Activated CD8-positive, alpha-beta memory T cell treated with anti-CD3 and anti-CD28 coated beads, Interleukin-2, amount 10 ng/mL, durations not matched to agents 7 days and 5 days (primary cell): ENCODE measurements at regions of chr2 and their contacts with region 1.

Region 1: DNA sequence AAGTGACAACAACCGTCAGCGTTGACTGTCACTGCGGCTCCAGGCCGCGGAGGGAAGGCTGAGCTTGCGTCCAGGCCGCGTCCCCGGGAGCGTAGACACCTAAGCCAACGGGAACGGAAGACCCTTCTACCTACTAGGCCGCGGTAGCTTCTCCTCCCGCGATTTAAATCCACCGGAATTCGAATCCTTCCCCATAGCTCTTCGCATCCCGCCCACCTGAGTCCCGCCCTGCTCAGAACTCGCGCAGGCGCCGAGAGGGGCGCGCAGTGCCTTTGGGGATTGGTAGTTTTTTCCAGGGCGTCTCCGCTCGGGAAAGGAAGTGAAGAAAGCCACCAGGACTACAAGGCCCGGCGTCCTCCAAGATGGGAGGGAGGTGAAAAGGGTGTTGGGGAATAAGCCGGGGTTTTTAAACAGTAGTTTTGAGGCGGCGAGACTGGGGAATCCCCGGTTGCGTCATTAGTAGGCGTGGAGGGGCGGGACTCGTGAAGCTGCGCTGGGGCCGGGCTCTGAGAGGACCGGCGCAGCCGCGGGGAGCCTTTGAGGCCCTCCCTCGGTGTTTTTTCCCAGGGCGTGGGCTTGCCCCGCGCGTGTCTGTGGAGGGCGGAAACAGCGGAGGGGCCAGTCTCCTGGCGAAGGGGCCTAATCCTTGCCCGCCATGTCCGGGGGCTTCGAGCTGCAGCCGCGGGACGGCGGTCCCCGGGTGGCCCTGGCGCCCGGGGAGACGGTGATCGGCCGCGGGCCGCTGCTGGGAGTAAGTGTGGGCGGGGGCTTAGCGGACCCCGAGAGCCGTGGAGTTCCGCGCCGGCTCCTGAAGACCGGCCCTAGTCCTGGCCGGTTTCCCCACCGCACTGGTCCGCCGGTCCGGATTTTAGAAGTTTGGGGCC is at the starts of genes APLF and FBXO48:
- DNase-seq: peak; percentile 99
- ATAC-seq: peak; percentile 90
- H3K4me3 Mint-ChIP-seq: peak within 1 kb of the TSS; percentile 100
- H3K27ac Mint-ChIP-seq: peak within 1 kb of the TSS; percentile 93
- H3K4me1 Mint-ChIP-seq: peaks cover 39% of the 10 kb centered on the region
- H3K27me3 Mint-ChIP-seq: no peaks in the 10 kb centered on the region
- total RNA-seq, gene APLF: 3.0 to 3.3 TPM
- total RNA-seq, gene FBXO48: 3.3 to 3.4 TPM

Region 2: DNA sequence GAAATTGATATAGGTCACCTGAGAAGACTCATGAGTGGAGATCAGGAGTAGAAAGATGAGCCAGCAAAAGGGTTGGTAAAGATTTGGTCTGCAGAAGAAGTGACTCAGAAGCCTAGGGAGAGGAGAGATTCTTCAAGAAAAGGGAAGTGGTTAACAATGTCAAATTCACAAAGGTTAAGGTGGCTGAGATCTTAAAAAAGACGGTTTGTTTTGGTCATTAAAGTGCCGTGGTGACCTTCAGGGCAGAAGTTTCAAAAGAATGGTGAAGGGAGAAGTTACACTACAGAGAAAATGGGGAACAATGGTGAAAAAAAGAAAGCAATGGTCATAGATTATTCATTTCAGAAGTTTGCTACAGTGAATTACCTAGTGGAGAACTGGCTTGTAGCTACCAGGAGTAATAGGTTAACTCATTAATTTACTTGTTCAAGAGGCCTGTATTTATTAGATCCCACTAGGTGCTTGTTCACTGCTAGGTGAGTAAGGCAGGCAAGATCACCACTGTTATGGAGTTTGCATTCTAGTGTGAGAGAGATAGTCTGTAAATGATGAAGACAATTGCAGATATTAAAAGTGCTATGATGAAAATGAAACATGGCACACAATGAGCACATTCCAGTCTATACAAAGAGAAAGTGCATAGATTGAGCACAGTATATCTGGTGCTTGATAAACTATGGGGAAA is 43.2 kb before region 1 on chr2:
- CTCF ChIA-PET with region 1: no interaction called
- DNase-seq: no peak
- ATAC-seq: peak; percentile 85
- H3K4me3 Mint-ChIP-seq: no peak overlapping the region
- H3K27ac Mint-ChIP-seq: no peak overlapping the region
- H3K4me1 Mint-ChIP-seq: peaks cover 42% of the 10 kb centered on the region
- H3K27me3 Mint-ChIP-seq: no peaks in the 10 kb centered on the region

Region 3: DNA sequence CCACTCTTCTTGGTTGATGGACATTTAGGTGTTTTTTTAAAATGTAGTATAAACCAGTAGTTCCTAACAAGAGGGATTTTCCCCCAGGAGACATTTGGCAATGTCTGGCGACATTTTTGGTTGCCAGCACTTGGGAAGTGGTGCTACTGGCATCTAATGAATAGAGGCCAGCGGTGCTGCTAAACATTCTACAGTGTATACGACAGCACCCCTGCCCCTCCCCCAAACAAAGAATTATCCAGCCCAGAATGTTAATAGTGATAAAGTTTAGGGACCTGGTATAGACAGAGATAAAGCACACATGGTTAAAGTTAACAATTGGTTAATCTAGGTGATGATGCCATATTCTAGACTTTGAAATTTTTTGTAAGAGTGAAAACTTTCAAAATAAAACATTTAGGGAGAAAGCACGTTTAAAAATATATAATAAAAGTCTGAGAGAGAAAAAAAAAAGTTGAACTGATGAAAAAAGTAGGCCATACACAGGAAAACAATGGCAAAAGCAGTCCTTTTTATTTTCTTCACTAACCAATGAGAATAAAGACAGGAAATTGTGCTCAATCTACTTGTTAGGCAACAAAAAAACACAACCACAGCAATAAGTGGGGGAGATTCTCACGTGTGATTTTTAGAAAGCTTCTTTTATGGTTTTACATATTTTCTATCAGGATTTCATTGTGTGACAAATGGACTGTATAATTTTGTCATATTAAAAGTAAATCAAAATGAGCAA is 15.0 kb before region 1 on chr2:
- CTCF ChIA-PET with region 1: interaction called, 35 read pairs
- DNase-seq: no peak
- ATAC-seq: no peak
- H3K4me3 Mint-ChIP-seq: no peak overlapping the region
- H3K27ac Mint-ChIP-seq: no peak overlapping the region
- H3K4me1 Mint-ChIP-seq: peaks cover 3% of the 10 kb centered on the region
- H3K27me3 Mint-ChIP-seq: no peaks in the 10 kb centered on the region

Region 4: GRCh38 chr2:68594674-68595492 is 127.6 kb after region 1 on chr2:
- CTCF ChIA-PET with region 1: interaction called, 19 read pairs
- DNase-seq: peak; percentile 69
- ATAC-seq: peak; percentile 77
- H3K4me3 Mint-ChIP-seq: peak overlapping the region; percentile 27
- H3K27ac Mint-ChIP-seq: peak overlapping the region; percentile 50
- H3K4me1 Mint-ChIP-seq: peaks cover 11% of the 10 kb centered on the region
- H3K27me3 Mint-ChIP-seq: peaks cover 13% of the 10 kb centered on the region

Region 5: GRCh38 chr2:68623820-68624219 is 156.5 kb after region 1 on chr2:
- CTCF ChIA-PET with region 1: no interaction called
- DNase-seq: no peak
- ATAC-seq: no peak
- H3K4me3 Mint-ChIP-seq: no peak overlapping the region
- H3K27ac Mint-ChIP-seq: no peak overlapping the region
- H3K4me1 Mint-ChIP-seq: no peaks in the 10 kb centered on the region
- H3K27me3 Mint-ChIP-seq: peaks cover 11% of the 10 kb centered on the region

Region 6: DNA sequence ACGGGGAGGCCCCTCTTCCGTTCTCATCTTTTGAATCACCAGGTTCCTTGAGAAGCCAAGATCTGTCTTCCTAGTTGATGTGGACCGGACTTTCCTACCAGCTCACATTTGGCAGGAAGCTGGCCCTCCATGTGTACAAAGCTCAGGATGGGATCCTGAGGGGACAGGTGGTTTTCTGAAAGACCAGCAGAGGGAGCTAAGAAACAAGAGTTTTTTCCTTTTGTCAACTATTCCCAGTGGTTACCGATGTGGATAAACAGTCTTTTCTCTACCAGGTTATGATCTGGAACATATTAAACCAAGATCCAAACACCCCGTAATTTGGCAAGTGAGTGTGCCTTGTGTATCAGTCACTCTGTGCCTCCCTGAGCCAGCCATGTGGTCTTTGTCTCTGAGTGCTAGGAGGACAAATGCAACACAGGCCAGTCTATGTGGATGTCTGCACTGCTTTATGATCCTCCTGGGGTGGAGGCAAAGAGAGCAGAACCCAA is 242.1 kb after region 1 on chr2:
- CTCF ChIA-PET with region 1: interaction called, 15 read pairs
- DNase-seq: no peak
- ATAC-seq: peak; percentile 82
- H3K4me3 Mint-ChIP-seq: no peak overlapping the region
- H3K27ac Mint-ChIP-seq: peak overlapping the region; percentile 7
- H3K4me1 Mint-ChIP-seq: peaks cover 26% of the 10 kb centered on the region
- H3K27me3 Mint-ChIP-seq: peaks cover 2% of the 10 kb centered on the region

Region 7: GRCh38 chr2:68837164-68837860 is 370.0 kb after region 1 on chr2:
- CTCF ChIA-PET with region 1: interaction called, 14 read pairs
- DNase-seq: peak; percentile 77
- ATAC-seq: peak; percentile 64
- H3K4me3 Mint-ChIP-seq: no peak overlapping the region
- H3K27ac Mint-ChIP-seq: peak overlapping the region; percentile 83
- H3K4me1 Mint-ChIP-seq: peaks cover 36% of the 10 kb centered on the region
- H3K27me3 Mint-ChIP-seq: no peaks in the 10 kb centered on the region